ENCODE measurements at regions of chr5 and their contacts with region 1.

Region 1: GRCh38 chr5:42889311-42889933 is 77.7 kb upstream of the SELENOP start:
- DNase-seq: peak; percentile 81
- ATAC-seq: peak; percentile 93
- H3K4me3 Mint-ChIP-seq: no peak overlapping the region
- H3K27ac Mint-ChIP-seq: no peak overlapping the region
- H3K4me1 Mint-ChIP-seq: no peaks in the 10 kb centered on the region
- H3K27me3 Mint-ChIP-seq: peaks cover 11% of the 10 kb centered on the region

Region 2: GRCh38 chr5:42641336-42642005 is 248.0 kb before region 1 on chr5:
- CTCF ChIA-PET with region 1: no interaction called
- POLR2A ChIA-PET with region 1: no interaction called
- DNase-seq: no peak
- ATAC-seq: no peak
- H3K4me3 Mint-ChIP-seq: no peak overlapping the region
- H3K27ac Mint-ChIP-seq: no peak overlapping the region
- H3K4me1 Mint-ChIP-seq: no peaks in the 10 kb centered on the region
- H3K27me3 Mint-ChIP-seq: no peaks in the 10 kb centered on the region

Region 3: GRCh38 chr5:42759456-42759855 is 130.0 kb before region 1 on chr5:
- CTCF ChIA-PET with region 1: no interaction called
- POLR2A ChIA-PET with region 1: no interaction called
- DNase-seq: no peak
- ATAC-seq: no peak
- H3K4me3 Mint-ChIP-seq: no peak overlapping the region
- H3K27ac Mint-ChIP-seq: no peak overlapping the region
- H3K4me1 Mint-ChIP-seq: peaks cover 3% of the 10 kb centered on the region
- H3K27me3 Mint-ChIP-seq: no peaks in the 10 kb centered on the region

Region 4: DNA sequence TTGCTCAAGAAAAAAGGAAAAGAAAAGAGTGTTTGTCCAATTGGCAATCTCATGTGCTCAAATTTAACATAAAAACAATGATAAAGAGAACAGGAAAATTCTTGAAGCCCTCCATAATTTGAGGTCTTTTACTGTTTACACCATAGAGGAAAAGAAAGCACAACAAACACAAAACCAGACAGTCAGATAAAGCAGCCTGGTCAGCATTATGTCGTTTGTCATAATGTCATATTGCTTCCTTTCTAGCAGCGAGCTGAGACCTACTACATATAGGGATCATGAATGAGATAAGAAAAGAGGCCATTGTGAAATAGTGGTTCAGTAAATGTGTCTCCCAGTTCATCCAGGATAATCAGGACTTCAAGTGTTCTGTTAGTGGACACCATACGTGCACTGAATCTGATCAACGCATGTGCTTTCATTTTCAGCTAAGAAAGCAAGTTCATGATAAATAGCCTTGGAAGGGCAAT is 13.0 kb before region 1 on chr5:
- CTCF ChIA-PET with region 1: interaction called, 29 read pairs
- POLR2A ChIA-PET with region 1: no interaction called
- DNase-seq: no peak
- ATAC-seq: no peak
- H3K4me3 Mint-ChIP-seq: no peak overlapping the region
- H3K27ac Mint-ChIP-seq: no peak overlapping the region
- H3K4me1 Mint-ChIP-seq: peaks cover 9% of the 10 kb centered on the region
- H3K27me3 Mint-ChIP-seq: peaks cover 3% of the 10 kb centered on the region

Measured in activated CD8-positive, alpha-beta T cell treated with anti-CD3 and anti-CD28 coated beads, Interleukin-2, amount 10 ng/mL, durations not matched to agents 7 days and 5 days (primary cell).